Right lobe of liver (tissue), 6 donors: ENCODE measurements at regions of chr10 and their contacts with region 1.

Region 1: GRCh38 chr10:112963835-112964234 is 13.8 kb downstream of the TCF7L2 start:
- DNase-seq: no peak
- ATAC-seq: peak in 3 of 4 donors; percentile 22 to 56 (median 26)
- H3K4me3 ChIP-seq: no peak overlapping the region
- H3K27ac ChIP-seq: no peak overlapping the region
- H3K4me1 ChIP-seq: peaks cover 0 to 5% (median 0%) of the 10 kb centered on the region in 4 donors
- H3K27me3 ChIP-seq: no peaks in the 10 kb centered on the region
- CTCF ChIP-seq: no peak
- POLR2A ChIP-seq: no peak

Region 2: GRCh38 chr10:112915590-112916572 is 48.0 kb before region 1 on chr10:
- intact Hi-C with region 1: no loop called
- DNase-seq: peak in 1 of 3 donors; percentile 59
- ATAC-seq: peak; percentile 65 to 78 (median 68)
- H3K4me3 ChIP-seq: no peak overlapping the region
- H3K27ac ChIP-seq: peak overlapping the region; percentile 43 to 77 (median 50)
- H3K4me1 ChIP-seq: peaks cover 0 to 28% (median 6%) of the 10 kb centered on the region in 4 donors
- H3K27me3 ChIP-seq: no peaks in the 10 kb centered on the region
- CTCF ChIP-seq: no peak
- POLR2A ChIP-seq: no peak

Region 3: GRCh38 chr10:113019692-113020424 is 56.0 kb after region 1 on chr10:
- intact Hi-C with region 1: loop called in 1 of 2 experiments (anchors 10 kb)
- DNase-seq: no peak
- ATAC-seq: peak; percentile 14 to 39 (median 22)
- H3K4me3 ChIP-seq: no peak overlapping the region
- H3K27ac ChIP-seq: peak overlapping the region; percentile 72 to 90 (median 87)
- H3K4me1 ChIP-seq: peaks cover 0 to 52% (median 24%) of the 10 kb centered on the region in 4 donors
- H3K27me3 ChIP-seq: no peaks in the 10 kb centered on the region
- CTCF ChIP-seq: no peak
- POLR2A ChIP-seq: no peak